CD8-positive, alpha-beta T cell (primary cell): ENCODE measurements at regions of chrX and their contacts with region 1.

Region 1: DNA sequence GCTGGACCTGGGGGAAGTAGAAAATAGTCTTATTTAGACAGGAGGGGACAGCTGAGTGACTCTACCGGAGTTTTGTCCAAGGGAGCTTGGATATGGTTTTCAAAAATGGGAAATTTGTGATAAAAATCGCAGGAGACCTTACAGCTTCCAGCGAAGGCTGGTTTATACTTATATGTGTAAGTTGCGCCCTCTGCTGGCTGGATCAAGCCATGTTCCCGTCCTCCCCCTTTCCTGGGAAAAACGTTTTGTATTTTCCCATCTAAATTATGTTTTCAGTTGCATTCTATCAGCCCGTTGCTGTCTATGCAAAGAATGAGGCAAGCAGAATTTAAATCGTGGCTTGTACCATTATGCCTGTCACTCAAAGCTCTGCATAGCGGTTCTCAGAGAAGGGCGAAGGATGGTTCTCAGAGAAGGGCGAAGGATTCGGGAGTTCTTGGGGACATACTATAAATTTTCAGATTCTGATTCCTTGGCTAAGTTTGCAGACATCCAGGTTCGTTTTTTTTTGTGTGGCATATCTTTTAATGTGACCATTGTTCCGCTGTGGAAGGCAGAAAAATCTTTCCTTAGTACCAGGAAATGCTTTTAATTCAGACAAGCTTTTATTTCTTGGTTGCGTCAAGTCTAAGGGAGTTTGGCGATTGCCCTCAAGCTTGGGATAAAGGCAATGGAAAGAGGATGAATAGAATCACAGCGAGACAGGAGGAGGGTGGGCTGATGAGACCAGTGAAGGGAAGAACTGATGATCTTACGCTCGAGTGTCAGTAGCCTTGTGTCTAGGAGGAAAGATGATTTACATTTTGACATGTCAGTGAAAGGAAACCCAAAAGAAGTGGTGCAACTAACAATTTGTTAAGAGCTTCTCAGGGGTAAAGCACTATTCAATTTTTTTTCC is 128.5 kb upstream of the ARX start:
- DNase-seq: peak in 6 of 9 experiments; percentile 1 to 47 (median 34)
- ATAC-seq: no peak
- H3K4me3 ChIP-seq: no peak overlapping the region
- H3K4me3 Mint-ChIP-seq: no peak overlapping the region
- H3K27ac ChIP-seq: no peak overlapping the region
- H3K27ac Mint-ChIP-seq: no peak overlapping the region
- H3K4me1 ChIP-seq: no peaks in the 10 kb centered on the region
- H3K4me1 Mint-ChIP-seq: no peaks in the 10 kb centered on the region
- H3K27me3 ChIP-seq: no peaks in the 10 kb centered on the region
- H3K27me3 Mint-ChIP-seq: peaks cover 8% of the 10 kb centered on the region
- CTCF ChIP-seq: peak; percentile 51

Region 2: DNA sequence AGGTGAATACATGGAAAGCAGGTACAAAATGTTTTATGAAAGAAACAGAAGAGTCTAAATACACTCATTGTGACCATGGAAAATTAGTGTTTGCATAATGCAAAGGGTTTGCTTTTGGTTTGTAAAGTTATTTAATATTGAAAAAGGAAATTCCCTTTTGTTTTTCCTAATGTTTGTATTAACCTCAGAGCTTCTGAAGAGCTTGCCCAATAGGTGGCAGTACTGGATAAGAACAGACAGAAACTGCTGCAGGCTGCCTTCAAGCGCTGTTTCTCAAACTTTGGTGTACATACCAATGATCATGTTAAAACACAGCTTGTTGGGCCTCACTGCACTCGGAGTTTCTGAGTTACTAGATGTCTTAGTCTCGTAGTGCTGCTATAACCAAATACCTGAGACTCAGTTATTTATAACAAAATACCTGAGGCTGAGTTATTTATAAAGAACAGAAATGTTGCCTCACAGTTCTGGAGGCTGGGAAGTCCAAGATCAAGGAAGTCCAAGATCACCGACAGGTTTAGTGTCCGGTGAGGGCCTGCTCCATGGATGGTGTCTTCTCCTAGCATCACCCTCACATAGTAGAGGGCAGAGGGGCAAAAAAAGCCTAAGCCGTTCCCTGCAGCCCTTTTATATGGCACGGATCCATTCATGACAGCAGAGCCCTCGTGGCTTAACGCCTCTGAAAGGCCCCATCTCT is 884.6 kb before region 1 on chrX:
- CTCF ChIA-PET with region 1: no interaction called
- POLR2A ChIA-PET with region 1: no interaction called
- intact Hi-C with region 1: loop called in 1 of 2 experiments (anchors 5 kb)
- DNase-seq: peak in 3 of 9 experiments; percentile 5 to 37 (median 24)
- ATAC-seq: no peak
- H3K4me3 ChIP-seq: no peak overlapping the region
- H3K4me3 Mint-ChIP-seq: no peak overlapping the region
- H3K27ac ChIP-seq: no peak overlapping the region
- H3K27ac Mint-ChIP-seq: no peak overlapping the region
- H3K4me1 ChIP-seq: peaks cover 4% of the 10 kb centered on the region
- H3K4me1 Mint-ChIP-seq: peaks cover 7% of the 10 kb centered on the region
- H3K27me3 ChIP-seq: no peaks in the 10 kb centered on the region
- H3K27me3 Mint-ChIP-seq: no peaks in the 10 kb centered on the region
- CTCF ChIP-seq: no peak

Region 3: GRCh38 chrX:24371391-24371972 is 772.8 kb before region 1 on chrX:
- CTCF ChIA-PET with region 1: interaction called, 14 read pairs
- POLR2A ChIA-PET with region 1: no interaction called
- intact Hi-C with region 1: loop called in 1 of 2 experiments (anchors 2 kb)
- DNase-seq: peak; percentile 15 to 74 (median 55)
- ATAC-seq: peak; percentile 69
- H3K4me3 ChIP-seq: no peak overlapping the region
- H3K4me3 Mint-ChIP-seq: peak overlapping the region; percentile 59
- H3K27ac ChIP-seq: no peak overlapping the region
- H3K27ac Mint-ChIP-seq: no peak overlapping the region
- H3K4me1 ChIP-seq: no peaks in the 10 kb centered on the region
- H3K4me1 Mint-ChIP-seq: peaks cover 9% of the 10 kb centered on the region
- H3K27me3 ChIP-seq: no peaks in the 10 kb centered on the region
- H3K27me3 Mint-ChIP-seq: peaks cover 4% of the 10 kb centered on the region
- CTCF ChIP-seq: peak; percentile 52

Region 4: DNA sequence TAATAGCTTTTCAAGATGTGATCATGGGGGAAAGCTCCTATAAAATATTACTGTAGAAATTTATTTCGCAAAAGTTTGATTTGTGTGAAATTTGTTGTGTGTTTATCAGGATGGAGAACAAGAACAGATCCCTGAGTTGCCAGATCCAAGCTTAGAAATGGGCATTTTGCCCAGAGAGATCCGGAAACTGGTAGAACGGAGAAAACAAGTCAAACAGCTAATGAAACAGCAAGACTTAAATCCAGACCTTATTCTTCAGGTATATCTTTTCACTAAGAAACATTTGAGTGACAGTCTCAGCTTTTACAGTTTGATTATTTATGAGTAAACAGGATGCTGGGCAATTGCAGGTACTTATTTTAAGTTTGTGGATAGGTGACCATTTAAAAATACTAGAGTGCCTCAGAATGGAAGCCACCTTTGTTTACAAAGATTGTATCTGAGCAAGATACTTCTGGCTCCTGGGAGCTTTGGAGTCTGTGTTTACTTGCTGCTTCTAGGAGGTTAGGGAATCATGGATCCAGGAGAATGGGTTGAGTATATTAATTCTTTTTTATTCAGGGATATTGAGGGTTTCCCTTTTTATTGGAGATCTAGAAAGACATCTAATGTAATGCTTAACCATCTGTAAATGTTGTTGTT is 396.0 kb before region 1 on chrX:
- CTCF ChIA-PET with region 1: interaction called, 4 read pairs
- POLR2A ChIA-PET with region 1: no interaction called
- intact Hi-C with region 1: loop called in 1 of 2 experiments (anchors 2 kb)
- DNase-seq: no peak
- ATAC-seq: no peak
- H3K4me3 ChIP-seq: no peak overlapping the region
- H3K4me3 Mint-ChIP-seq: no peak overlapping the region
- H3K27ac ChIP-seq: no peak overlapping the region
- H3K27ac Mint-ChIP-seq: no peak overlapping the region
- H3K4me1 ChIP-seq: no peaks in the 10 kb centered on the region
- H3K4me1 Mint-ChIP-seq: no peaks in the 10 kb centered on the region
- H3K27me3 ChIP-seq: no peaks in the 10 kb centered on the region
- H3K27me3 Mint-ChIP-seq: no peaks in the 10 kb centered on the region
- CTCF ChIP-seq: no peak

Region 5: DNA sequence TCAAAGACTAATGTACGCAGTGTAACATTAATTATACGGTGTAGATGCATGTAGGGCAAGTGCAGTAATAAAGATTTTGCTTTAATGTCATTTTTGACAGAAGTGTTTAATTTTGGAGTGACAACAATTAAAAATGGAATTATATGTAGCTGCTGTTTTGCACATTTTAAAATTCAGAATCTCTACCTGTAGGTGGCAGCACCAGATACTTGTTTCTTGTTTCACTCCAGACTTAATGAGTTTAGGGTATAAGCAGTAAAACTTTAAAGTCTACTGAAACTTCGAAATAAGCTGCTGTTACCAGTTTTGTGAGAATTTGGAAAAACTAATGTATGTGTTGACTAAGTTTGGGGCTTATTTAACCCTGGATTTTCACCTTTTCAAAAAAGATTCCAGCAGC is 305.7 kb before region 1 on chrX:
- CTCF ChIA-PET with region 1: interaction called, 28 read pairs
- POLR2A ChIA-PET with region 1: no interaction called
- intact Hi-C with region 1: loop called in 1 of 2 experiments (anchors 2 kb)
- DNase-seq: peak in 2 of 9 experiments; percentile 22 to 33
- ATAC-seq: no peak
- H3K4me3 ChIP-seq: no peak overlapping the region
- H3K4me3 Mint-ChIP-seq: no peak overlapping the region
- H3K27ac ChIP-seq: no peak overlapping the region
- H3K27ac Mint-ChIP-seq: no peak overlapping the region
- H3K4me1 ChIP-seq: no peaks in the 10 kb centered on the region
- H3K4me1 Mint-ChIP-seq: no peaks in the 10 kb centered on the region
- H3K27me3 ChIP-seq: no peaks in the 10 kb centered on the region
- H3K27me3 Mint-ChIP-seq: no peaks in the 10 kb centered on the region
- CTCF ChIP-seq: peak; percentile 32

Region 6: GRCh38 chrX:25083661-25084060 is 60.6 kb before region 1 on chrX:
- CTCF ChIA-PET with region 1: no interaction called
- POLR2A ChIA-PET with region 1: no interaction called
- intact Hi-C with region 1: no loop called
- DNase-seq: no peak
- ATAC-seq: no peak
- H3K4me3 ChIP-seq: no peak overlapping the region
- H3K4me3 Mint-ChIP-seq: no peak overlapping the region
- H3K27ac ChIP-seq: no peak overlapping the region
- H3K27ac Mint-ChIP-seq: no peak overlapping the region
- H3K4me1 ChIP-seq: no peaks in the 10 kb centered on the region
- H3K4me1 Mint-ChIP-seq: no peaks in the 10 kb centered on the region
- H3K27me3 ChIP-seq: no peaks in the 10 kb centered on the region
- H3K27me3 Mint-ChIP-seq: no peaks in the 10 kb centered on the region
- CTCF ChIP-seq: no peak